PC-9 (cell line): ENCODE measurements at regions of chr20 and their contacts with region 1.

Region 1: DNA sequence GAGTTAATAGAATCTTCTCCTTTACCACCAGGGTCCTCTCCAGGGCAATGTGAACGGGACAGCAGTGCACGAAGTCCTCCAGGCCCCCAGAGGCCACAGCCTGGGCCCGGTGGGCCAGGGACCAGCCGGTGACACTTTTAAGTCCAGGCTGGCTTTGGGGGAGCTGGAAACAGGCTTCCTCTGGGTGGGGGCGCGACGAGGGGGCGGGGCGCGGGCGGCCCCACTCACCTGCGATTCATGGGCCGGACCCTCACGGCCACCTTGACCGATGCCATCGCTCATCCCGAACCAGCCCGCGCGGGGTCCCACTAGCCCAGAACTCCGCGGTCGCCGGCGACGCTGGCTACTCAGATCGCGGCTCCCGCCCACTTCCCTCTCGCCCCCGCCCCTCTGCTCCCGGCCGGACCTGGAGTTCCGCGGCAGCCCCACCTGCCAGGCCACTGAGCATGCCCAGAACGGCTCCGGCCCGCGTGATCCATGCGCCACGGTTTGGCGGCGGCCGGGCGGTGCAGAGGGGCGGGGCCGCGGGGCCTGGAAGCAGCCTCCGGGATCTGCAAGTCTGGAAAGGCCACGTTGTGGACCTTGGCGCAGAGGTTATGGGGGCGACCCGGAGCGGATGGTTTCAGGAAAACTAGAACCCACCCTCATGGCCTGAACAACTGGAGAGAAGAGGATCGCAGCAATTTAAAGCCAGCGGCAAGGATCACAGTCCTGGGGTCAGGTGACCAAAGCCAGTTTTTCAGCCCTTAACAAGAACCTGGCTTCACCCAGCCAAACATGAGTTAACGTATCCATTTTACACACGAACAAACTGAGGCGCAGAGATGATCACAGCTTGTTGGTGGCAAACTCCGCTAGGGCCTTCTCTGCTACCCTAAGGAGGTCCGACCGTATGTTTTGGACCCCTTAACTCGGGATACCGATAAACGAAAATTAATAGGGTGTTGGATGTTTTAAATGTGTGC is at the start of gene KIF16B:
- DNase-seq: peak; percentile 79 to 99
- H3K4me3 ChIP-seq: peak within 1 kb of the TSS; percentile 80
- H3K27ac ChIP-seq: peak within 1 kb of the TSS; percentile 36; the same call in 1 of the 2 replicates
- H3K4me1 ChIP-seq: peaks cover 16% of the 10 kb centered on the region
- H3K27me3 ChIP-seq: no peaks in the 10 kb centered on the region
- CTCF ChIP-seq: no peak
- total RNA-seq, gene KIF16B: 15.1 and 17.6 TPM in 2 replicates

Region 2: DNA sequence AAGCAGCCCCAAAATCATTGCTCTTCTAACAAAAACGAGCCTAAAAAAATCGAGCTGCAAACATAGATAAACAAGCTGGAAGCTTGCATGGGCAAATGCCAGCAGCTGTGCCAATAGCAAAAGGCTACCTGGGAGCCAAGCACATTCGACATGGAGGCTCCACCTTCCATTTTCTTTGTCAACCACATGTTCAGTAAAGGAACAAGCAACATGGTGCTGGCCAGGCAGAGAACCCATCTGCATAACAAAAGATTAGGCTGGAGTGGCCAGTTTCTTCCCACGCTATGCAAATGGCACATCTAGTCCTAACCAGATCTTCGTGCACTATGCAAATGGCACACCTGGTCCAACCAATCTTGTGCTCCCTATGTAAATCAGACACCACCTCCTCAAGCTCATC is 110.6 kb before region 1 on chr20:
- CTCF ChIA-PET with region 1: no interaction called
- POLR2A ChIA-PET with region 1: no interaction called
- intact Hi-C with region 1: no loop called
- DNase-seq: no peak
- H3K4me3 ChIP-seq: no peak overlapping the region
- H3K27ac ChIP-seq: no peak overlapping the region
- H3K4me1 ChIP-seq: no peaks in the 10 kb centered on the region
- H3K27me3 ChIP-seq: no peaks in the 10 kb centered on the region
- CTCF ChIP-seq: no peak

Region 3: DNA sequence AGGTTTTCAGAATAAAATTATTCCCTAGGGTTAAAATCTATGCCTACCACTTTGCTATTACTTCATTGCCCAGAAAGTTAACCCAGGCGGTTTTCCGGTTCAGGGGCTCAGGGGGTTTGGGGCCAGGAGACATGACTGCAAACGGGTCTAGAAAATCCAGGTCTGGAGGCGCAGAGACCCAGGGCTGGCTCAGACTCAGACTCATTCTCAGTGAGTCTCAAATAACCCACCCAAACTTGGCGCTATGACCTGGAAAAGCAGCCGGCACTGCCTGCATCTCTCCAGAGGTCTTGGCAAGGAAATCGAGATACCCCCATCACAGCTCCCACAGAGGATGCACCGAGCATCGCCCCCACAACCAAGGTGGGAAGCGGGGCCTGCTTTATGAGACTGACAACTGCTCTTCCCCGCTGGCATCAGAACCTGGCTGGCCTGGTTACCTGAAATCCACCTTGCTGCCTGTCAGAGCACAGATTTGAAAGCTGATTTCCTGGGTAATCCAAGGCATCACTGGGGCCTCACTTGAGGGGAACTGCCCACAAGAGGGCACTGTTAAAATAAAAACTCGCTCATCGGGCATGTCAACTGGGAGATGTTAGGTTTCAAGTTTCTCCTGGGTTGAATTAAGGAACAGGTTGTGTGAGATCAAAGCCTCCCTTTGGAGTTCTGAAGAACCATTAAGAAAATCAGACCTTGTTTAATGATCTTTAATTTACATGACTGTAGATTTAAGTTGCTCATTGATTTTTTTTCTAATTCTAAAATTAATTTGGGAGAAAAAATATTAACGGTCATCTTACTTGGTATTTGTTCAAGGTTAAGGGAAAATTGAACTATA is 55.1 kb before region 1 on chr20:
- CTCF ChIA-PET with region 1: interaction called, 6 read pairs
- POLR2A ChIA-PET with region 1: no interaction called
- intact Hi-C with region 1: loop called (anchors 2 kb)
- DNase-seq: peak; percentile 53 to 61
- H3K4me3 ChIP-seq: no peak overlapping the region
- H3K27ac ChIP-seq: no peak overlapping the region
- H3K4me1 ChIP-seq: no peaks in the 10 kb centered on the region
- H3K27me3 ChIP-seq: no peaks in the 10 kb centered on the region
- CTCF ChIP-seq: peak; percentile 82

Region 4: DNA sequence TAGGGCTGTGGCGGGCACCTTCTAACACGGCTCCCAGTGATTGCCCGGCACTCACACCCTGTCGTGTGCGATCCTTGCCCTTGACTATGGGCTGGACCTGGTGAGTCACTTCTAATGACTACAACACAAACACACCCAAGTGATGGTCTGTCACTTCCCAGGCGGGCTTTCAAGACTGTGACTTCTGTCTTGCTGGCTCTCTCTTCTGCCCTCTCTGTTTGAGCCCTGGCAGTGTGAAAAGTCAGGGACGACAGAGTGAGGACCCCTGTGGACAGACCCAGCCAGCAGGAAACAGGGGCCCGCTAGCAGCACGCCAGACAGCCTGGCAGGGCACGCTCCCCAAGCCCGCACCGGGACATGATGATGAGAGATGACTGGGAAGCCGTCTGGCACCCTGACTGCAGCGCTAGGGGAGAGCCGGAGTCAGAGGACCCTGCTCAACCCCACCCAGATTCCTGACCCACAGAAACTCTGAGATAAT is 43.0 kb before region 1 on chr20:
- CTCF ChIA-PET with region 1: no interaction called
- POLR2A ChIA-PET with region 1: no interaction called
- intact Hi-C with region 1: loop called (anchors 1 kb)
- DNase-seq: peak; percentile 61 to 85
- H3K4me3 ChIP-seq: peak overlapping the region; percentile 26; the same call in 1 of the 2 replicates
- H3K27ac ChIP-seq: peak overlapping the region; percentile 88
- H3K4me1 ChIP-seq: peaks cover 36% of the 10 kb centered on the region
- H3K27me3 ChIP-seq: no peaks in the 10 kb centered on the region
- CTCF ChIP-seq: no peak

Region 5: GRCh38 chr20:16583474-16583873 is 10.2 kb after region 1 on chr20:
- CTCF ChIA-PET with region 1: no interaction called
- POLR2A ChIA-PET with region 1: no interaction called
- intact Hi-C with region 1: no loop called
- DNase-seq: no peak
- H3K4me3 ChIP-seq: no peak overlapping the region
- H3K27ac ChIP-seq: no peak overlapping the region
- H3K4me1 ChIP-seq: peaks cover 18% of the 10 kb centered on the region
- H3K27me3 ChIP-seq: no peaks in the 10 kb centered on the region; the same call in 1 of the 2 replicates
- CTCF ChIP-seq: no peak

Region 6: DNA sequence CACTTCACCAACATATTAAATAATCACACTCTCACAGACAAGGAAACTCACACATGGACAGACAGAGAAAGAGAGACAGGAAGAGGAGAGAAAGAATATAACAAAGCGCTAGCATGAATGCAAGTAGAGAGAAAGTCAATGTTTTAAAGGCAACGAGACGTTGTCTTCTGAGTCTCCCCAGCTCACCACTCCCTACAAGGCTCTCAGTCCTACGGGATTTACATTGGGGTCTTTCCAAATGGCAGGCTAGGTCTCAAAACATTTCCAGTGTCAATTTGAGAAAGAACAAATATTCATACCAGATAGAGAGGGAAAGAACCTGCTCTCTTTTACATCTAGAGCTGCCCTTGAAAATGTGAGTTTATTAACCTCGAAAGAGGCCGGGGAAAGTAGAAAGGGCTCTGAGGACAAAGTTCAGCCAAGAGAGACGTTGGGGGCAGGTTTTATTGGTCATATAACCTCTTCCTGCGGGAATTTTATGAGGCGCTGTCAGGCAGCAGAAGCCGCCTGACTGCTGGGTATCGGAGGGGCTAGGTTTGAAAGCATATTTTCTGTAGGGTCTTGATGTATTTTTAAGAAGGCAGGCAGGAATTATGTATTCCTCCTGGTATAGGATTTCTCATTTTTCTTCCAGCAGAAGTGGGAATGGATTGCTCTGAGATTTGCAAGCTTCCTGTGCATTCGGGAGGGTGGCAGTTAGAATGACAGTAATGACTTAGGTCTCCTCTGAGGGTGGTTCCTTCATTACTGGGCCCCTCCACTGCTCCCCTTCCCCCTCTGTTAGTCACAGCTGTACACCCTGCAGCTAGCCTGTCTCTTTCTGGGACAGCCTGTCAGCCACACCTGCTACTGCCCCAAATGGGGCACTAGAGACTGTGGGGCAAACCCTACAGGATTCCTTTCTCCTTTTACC is 34.3 kb after region 1 on chr20:
- CTCF ChIA-PET with region 1: no interaction called
- POLR2A ChIA-PET with region 1: no interaction called
- intact Hi-C with region 1: no loop called
- DNase-seq: no peak
- H3K4me3 ChIP-seq: no peak overlapping the region
- H3K27ac ChIP-seq: no peak overlapping the region
- H3K4me1 ChIP-seq: no peaks in the 10 kb centered on the region
- H3K27me3 ChIP-seq: no peaks in the 10 kb centered on the region
- CTCF ChIP-seq: no peak

Region 7: GRCh38 chr20:16729565-16730456 is 156.5 kb after region 1 on chr20 and contains the start of gene SNRPB2:
- CTCF ChIA-PET with region 1: no interaction called
- POLR2A ChIA-PET with region 1: no interaction called
- intact Hi-C with region 1: loop called (anchors 1 kb)
- DNase-seq: peak; percentile 86 to 87
- H3K4me3 ChIP-seq: peak within 1 kb of the TSS; percentile 85
- H3K27ac ChIP-seq: peak within 1 kb of the TSS; percentile 38
- H3K4me1 ChIP-seq: peaks cover 24% of the 10 kb centered on the region
- H3K27me3 ChIP-seq: peaks cover 7% of the 10 kb centered on the region; the same call in 1 of the 2 replicates
- CTCF ChIP-seq: no peak
- total RNA-seq, gene SNRPB2: 44.8 and 57.9 TPM in 2 replicates